ENCODE measurements at regions of chr3 and their contacts with region 1.

Region 1: GRCh38 chr3:66500576-66501482 is at the start of gene LRIG1:
- DNase-seq: peak; percentile 99 to 100 (median 100)
- H3K4me3 ChIP-seq: peak within 1 kb of the TSS; percentile 99
- H3K27ac ChIP-seq: peak within 1 kb of the TSS; percentile 90 to 94
- H3K4me1 ChIP-seq: peaks cover 6% of the 10 kb centered on the region
- H3K27me3 ChIP-seq: no peaks in the 10 kb centered on the region
- CTCF ChIP-seq: peak; percentile 34 to 64 (median 41)
- EP300 ChIP-seq: no peak
- POLR2A ChIP-seq: peak; percentile 61
- total RNA-seq, gene LRIG1: 29.1 to 60.4 (median 42.6) TPM

Region 2: DNA sequence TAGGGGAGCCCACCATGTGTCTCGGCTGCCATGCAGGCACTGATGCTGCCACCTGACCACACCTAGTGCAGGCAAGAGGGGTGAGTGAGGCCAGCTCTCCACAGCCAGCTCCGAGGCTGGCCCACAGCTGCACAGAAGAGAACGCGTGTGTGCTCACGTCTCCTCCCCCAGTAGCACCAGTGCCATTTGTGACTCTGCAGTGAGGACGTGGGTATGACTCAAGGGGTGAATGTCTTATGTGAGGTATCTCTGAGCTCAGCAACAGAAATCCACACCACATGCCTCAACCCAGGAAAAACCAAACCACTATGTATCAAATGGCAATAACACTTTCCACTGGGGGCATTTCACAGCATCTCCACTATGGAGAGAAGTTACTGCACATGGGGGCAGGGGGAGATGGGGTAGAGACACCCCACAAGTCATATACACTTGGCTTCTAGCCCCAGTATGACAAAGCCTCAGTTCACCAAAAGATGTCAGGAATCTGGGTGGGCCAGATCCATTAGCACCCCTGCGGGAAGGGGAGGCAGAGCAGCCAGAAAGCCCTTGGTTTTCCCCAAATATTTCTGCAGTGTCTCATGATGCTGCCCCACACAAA is 87.6 kb before region 1 on chr3:
- intact Hi-C with region 1: loop called in 2 of 4 experiments (anchors 5 to 10 kb)
- DNase-seq: peak in 1 of 5 donors; percentile 9
- H3K4me3 ChIP-seq: no peak overlapping the region
- H3K27ac ChIP-seq: no peak overlapping the region
- H3K4me1 ChIP-seq: peaks cover 20% of the 10 kb centered on the region
- H3K27me3 ChIP-seq: no peaks in the 10 kb centered on the region
- CTCF ChIP-seq: no peak
- EP300 ChIP-seq: no peak
- POLR2A ChIP-seq: no peak

Region 3: GRCh38 chr3:66418475-66418931 is 82.3 kb before region 1 on chr3:
- intact Hi-C with region 1: loop called in 2 of 4 experiments (anchors 5 to 10 kb)
- DNase-seq: no peak
- H3K4me3 ChIP-seq: no peak overlapping the region
- H3K27ac ChIP-seq: no peak overlapping the region
- H3K4me1 ChIP-seq: peaks cover 20% of the 10 kb centered on the region
- H3K27me3 ChIP-seq: no peaks in the 10 kb centered on the region
- CTCF ChIP-seq: no peak
- EP300 ChIP-seq: no peak
- POLR2A ChIP-seq: no peak

Region 4: DNA sequence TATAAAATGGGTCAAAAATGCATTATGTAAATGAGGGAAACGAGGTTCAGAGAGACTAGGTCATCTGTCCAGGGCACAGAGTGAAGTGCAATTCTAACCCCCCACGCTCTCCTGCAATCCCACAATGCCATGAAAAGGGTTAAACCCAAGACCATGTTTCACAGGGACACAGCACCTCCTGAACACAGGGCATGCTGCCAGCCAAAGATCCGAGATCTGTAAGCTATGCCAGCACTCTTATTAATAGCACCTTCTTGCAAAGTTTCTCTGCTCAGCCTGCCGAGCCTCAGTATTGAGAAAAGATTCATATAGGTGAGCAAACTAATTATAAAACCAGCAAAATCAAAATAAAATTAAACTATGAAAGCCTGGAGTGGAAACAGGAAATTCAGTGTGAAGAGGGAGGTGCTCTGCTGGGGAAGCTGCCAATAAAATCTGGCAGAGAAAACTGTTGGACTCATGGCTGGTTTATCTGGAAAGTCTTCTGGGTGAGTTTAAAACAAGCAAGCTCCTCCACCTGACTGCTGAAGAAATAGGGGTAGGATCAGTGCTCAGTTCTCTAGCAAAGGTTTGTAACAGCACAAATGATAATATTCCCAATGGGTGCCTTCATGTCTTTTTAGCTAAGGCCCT is 50.3 kb before region 1 on chr3:
- intact Hi-C with region 1: loop called in 2 of 4 experiments (anchors 2 to 5 kb)
- DNase-seq: peak; percentile 59 to 83 (median 76)
- H3K4me3 ChIP-seq: no peak overlapping the region
- H3K27ac ChIP-seq: peak overlapping the region in 1 of 2 donors; percentile 34
- H3K4me1 ChIP-seq: peaks cover 28% of the 10 kb centered on the region
- H3K27me3 ChIP-seq: no peaks in the 10 kb centered on the region
- CTCF ChIP-seq: no peak
- EP300 ChIP-seq: no peak
- POLR2A ChIP-seq: no peak

Region 5: DNA sequence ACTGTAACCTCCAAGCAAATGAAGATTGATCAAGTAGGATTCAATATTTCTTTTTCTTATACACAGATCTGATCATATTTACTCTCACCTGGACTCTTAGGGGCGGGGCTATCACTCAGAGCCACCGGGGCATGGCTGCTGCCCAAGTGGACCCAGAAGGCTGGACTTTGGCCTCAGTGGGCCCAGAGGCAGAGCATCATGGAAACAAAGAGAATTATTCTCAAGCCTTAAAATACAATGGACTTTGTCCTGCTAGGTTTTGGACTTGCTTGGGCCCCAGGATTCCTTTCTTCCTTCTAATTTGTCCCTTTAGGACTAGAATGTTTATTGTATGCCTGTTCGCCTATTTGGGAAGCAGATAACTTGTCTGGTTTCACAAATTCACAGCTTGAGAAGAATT is 1068.5 kb after region 1 on chr3:
- intact Hi-C with region 1: no loop called
- DNase-seq: no peak
- H3K4me3 ChIP-seq: no peak overlapping the region
- H3K27ac ChIP-seq: no peak overlapping the region
- H3K4me1 ChIP-seq: no peaks in the 10 kb centered on the region
- H3K27me3 ChIP-seq: no peaks in the 10 kb centered on the region
- CTCF ChIP-seq: no peak
- EP300 ChIP-seq: no peak
- POLR2A ChIP-seq: no peak